ENCODE measurements at regions of chr2 and their contacts with region 1.

Region 1: DNA sequence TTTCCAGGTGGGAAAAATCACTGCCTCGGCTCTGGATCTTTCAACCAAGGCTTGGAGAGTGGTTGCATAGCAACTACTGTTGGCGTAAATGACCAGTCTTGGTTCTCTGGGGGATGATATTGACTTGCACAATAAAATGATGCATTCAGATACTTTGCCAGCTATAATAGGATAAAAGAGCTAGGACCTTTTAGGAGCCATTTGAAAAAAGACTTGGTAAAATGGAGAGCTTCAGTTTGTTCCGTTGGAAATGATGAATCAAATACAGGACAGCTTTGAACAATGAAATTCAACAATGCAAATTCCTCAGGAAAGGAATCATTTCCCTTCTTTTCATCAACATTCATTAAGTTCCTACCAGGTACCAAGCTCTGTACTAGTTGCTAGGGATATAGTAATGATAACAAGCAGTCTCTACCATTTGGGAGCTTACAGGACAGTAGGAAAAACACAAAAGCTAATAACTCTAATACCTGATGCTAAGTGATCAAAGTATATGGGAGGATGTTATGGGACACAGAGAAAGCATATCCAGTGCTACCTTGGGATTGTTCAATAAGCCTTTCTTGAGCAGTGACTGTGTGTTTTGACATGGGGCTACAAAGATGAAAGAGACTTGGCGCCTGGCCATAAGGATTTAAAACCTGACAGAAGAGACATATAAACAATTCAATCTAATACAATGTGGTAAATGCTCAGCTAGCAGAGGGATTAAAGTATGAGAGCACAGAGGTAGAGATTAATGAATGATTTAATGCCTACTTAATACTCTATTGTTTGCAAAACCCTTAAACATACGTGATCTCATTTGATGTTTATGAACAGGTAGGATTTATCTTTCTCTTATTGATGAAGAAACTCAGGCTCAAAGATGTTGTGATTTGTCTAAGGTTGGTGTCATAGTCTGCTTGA is 110.7 kb downstream of the QPCT start:
- DNase-seq: no peak

Region 2: DNA sequence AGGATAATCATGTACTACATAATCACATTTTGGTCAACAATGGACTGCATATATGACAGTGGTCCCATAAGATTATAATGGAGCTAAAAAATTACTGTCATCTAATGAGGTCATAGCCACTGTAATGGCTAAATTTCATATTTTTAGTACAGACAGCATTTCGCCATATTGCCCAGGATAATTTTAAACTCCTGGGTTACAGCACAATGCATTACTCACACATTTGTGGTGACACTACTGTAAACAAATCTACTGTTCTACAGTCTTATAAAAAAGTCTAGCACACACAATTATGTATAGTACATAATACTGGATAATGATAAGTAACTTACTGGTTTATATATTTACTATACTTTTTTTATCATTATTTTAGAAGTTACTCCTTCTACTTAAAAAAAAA is 311.1 kb before region 1 on chr2:
- intact Hi-C with region 1: no loop called
- DNase-seq: no peak

Region 3: GRCh38 chr2:37748541-37748940 is 293.4 kb after region 1 on chr2:
- intact Hi-C with region 1: no loop called
- DNase-seq: no peak

Region 4: GRCh38 chr2:38362232-38362631 is 907.1 kb after region 1 on chr2:
- intact Hi-C with region 1: loop called in 1 of 2 experiments (anchors 5 kb)
- DNase-seq: no peak